Thyroid gland (tissue), 4 donors: ENCODE measurements at regions of chr15 and their contacts with region 1.

Region 1: GRCh38 chr15:85794603-85795336 is at the start of gene KLHL25:
- DNase-seq: peak; percentile 95
- H3K4me3 ChIP-seq: peak within 1 kb of the TSS; percentile 47 to 90 (median 54)
- H3K27ac ChIP-seq: peak within 1 kb of the TSS; percentile 71 to 89 (median 88)
- H3K4me1 ChIP-seq: peaks cover 0 to 25% of the 10 kb centered on the region in 2 donors
- H3K27me3 ChIP-seq: no peaks in the 10 kb centered on the region
- CTCF ChIP-seq: no peak
- POLR2A ChIP-seq: peak; percentile 27 to 96
- total RNA-seq, gene KLHL25: 4.2 to 8.8 (median 4.8) TPM

Region 2: DNA sequence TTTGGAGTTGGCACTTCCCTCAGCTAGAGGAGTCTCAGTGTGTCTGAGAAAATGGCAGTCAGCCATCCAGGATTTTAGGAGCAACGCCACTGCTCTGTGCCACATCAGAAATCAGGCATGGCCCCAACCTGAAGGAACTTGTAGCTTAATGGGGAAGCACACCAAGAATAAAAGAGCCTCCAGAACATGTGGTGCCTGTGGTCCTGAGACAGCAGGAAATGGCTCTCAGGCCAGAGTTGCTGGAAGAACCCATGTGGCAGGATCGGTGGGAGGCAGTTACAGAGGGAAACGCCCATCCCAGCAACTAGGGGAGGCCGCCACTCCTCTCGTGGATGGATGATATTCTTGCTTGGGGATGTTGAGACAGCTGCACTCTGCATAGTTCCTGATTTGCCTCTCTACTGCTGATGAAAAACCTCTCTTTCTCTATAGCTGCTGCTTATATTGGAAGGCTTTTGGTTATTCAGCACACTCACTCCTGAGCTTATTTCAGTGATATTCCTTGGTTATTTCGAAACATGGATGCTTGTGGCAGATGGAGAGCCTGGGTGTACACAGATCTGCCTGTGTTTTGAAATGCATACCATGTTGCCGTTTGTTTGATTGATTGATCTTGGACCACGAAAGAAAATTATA is 52.5 kb before region 1 on chr15:
- intact Hi-C with region 1: loop called (anchors 10 kb)
- DNase-seq: no peak
- H3K4me3 ChIP-seq: no peak overlapping the region
- H3K27ac ChIP-seq: no peak overlapping the region
- H3K4me1 ChIP-seq: no peaks in the 10 kb centered on the region
- H3K27me3 ChIP-seq: no peaks in the 10 kb centered on the region
- CTCF ChIP-seq: no peak
- POLR2A ChIP-seq: no peak